B cell (primary cell): ENCODE measurements at regions of chr10 and their contacts with region 1.

Region 1: DNA sequence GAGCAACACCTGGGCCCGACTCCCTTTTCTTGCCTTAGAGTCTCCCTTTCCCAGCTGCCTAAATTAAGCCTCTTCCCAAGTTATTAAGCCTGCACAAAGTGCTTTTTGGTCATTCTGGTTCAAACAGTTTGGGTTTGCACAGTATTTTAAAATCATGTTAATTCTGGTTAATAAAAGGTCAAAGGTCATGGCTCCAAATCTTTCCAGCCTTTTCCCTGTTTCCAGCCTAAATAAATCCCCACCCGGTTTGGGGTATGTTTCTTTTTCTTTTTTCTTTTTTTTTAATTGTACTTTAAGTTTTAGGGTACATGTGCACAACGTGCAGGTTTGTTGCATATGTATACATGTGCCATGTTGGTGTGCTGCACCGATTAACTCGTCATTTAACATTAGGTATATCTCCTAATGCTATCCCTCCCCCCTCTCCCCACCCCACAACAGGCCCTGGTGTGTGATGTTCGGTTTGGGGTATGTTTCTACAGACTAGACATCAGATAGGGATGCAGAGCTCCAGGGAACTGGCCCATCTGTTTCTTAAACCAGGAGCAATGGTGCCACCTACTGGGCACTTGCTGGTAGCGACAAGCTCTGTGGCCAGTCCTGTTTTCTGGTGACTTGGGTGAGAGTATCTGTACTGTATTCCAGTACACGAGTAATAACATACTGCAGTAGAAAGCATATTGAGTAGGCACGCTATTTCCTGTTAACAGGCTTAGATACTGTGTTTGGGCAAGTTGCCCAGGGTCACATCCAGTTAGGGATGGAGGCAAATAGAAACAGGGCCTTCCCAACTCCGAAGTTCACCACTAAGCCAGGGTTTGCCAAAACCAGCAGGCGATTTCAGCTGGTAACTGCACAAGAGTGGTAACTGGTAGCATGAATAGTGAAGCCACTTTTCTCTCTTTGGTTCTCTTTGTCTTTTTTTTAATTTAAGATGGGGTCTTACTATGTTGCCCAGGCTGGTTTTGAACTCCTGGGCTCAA is 60.6 kb upstream of the TRIM8 start:
- DNase-seq: peak; percentile 85
- ATAC-seq: peak; percentile 96
- H3K4me3 ChIP-seq: no peak overlapping the region
- H3K4me3 Mint-ChIP-seq: no peak overlapping the region
- H3K27ac ChIP-seq: no peak overlapping the region
- H3K27ac Mint-ChIP-seq: no peak overlapping the region
- H3K4me1 ChIP-seq: no peaks in the 10 kb centered on the region
- H3K4me1 Mint-ChIP-seq: peaks cover 2% of the 10 kb centered on the region
- H3K27me3 ChIP-seq: no peaks in the 10 kb centered on the region
- H3K27me3 Mint-ChIP-seq: no peaks in the 10 kb centered on the region
- CTCF ChIP-seq: peak; percentile 90

Region 2: DNA sequence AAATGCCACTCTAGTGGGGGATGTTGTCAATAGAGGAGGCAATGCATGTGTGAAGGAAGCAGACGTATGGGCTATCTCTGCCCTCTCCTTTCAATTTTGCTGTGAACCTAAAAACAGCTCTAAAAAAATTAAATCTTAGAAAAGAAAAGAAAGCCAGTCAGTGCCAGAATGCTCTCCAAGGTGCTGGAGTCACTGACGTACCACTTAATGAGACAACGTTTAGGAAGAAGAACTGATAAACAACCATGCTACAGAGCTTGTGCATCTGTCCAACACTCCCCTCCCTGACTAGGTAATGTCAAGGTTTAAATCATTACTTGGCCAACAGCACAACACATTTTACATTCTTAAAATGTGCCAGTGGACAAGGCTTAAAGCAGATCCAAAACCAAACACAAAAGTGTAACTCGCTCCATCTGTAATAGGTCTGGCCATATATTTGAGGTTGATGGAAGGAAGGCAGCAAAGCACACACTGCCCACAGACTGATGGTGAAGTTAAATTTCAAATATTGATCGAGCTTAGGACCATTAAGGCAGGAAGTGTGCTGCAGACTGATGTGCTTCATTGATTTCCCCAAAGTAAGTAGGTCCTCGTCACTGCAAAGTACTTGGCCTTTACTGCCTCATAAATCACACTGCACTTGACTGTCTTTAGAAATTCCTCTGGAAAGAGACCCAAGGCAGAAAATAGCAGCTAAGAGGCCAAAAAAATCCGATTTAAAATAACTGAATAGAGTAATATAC is 543.2 kb before region 1 on chr10:
- CTCF ChIA-PET with region 1: no interaction called
- POLR2A ChIA-PET with region 1: no interaction called
- intact Hi-C with region 1: no loop called
- DNase-seq: no peak
- ATAC-seq: no peak
- H3K4me3 ChIP-seq: no peak overlapping the region
- H3K4me3 Mint-ChIP-seq: no peak overlapping the region
- H3K27ac ChIP-seq: no peak overlapping the region
- H3K27ac Mint-ChIP-seq: no peak overlapping the region
- H3K4me1 ChIP-seq: peaks cover 0 to 3% of the 10 kb centered on the region in 2 donors
- H3K4me1 Mint-ChIP-seq: peaks cover 21% of the 10 kb centered on the region
- H3K27me3 ChIP-seq: no peaks in the 10 kb centered on the region
- H3K27me3 Mint-ChIP-seq: no peaks in the 10 kb centered on the region
- CTCF ChIP-seq: no peak

Region 3: DNA sequence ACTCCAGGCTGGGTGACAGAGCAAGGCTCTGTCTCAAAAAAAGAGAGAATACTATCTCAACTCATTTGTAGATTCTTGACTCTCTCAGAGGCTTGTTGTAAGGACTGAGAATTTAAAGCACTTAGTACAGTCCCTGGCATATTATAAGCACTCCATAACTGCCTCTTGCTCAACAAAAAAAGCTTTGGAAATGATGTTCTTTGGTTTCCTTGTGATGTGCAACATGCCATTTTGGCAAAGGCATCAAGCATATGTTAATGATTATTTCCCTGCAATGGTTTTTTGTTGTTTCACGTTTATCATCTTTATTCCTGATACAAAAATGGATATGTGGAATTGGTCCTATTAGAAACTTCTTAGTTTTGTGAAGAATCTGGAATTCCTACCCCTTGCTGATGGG is 415.9 kb before region 1 on chr10:
- CTCF ChIA-PET with region 1: interaction called, 15 read pairs
- POLR2A ChIA-PET with region 1: no interaction called
- intact Hi-C with region 1: loop called (anchors 1 kb)
- DNase-seq: no peak
- ATAC-seq: no peak
- H3K4me3 ChIP-seq: no peak overlapping the region
- H3K4me3 Mint-ChIP-seq: no peak overlapping the region
- H3K27ac ChIP-seq: no peak overlapping the region
- H3K27ac Mint-ChIP-seq: no peak overlapping the region
- H3K4me1 ChIP-seq: peaks cover 7 to 8% of the 10 kb centered on the region in 2 donors
- H3K4me1 Mint-ChIP-seq: peaks cover 6% of the 10 kb centered on the region
- H3K27me3 ChIP-seq: no peaks in the 10 kb centered on the region
- H3K27me3 Mint-ChIP-seq: no peaks in the 10 kb centered on the region
- CTCF ChIP-seq: no peak

Region 4: GRCh38 chr10:102476466-102477141 is 107.1 kb before region 1 on chr10:
- CTCF ChIA-PET with region 1: interaction called, 28 read pairs
- POLR2A ChIA-PET with region 1: interaction called, 4 read pairs
- intact Hi-C with region 1: loop called (anchors 1 kb)
- DNase-seq: no peak
- ATAC-seq: no peak
- H3K4me3 ChIP-seq: no peak overlapping the region
- H3K4me3 Mint-ChIP-seq: no peak overlapping the region
- H3K27ac ChIP-seq: no peak overlapping the region
- H3K27ac Mint-ChIP-seq: no peak overlapping the region
- H3K4me1 ChIP-seq: peaks cover 0 to 7% of the 10 kb centered on the region in 2 donors
- H3K4me1 Mint-ChIP-seq: peaks cover 7% of the 10 kb centered on the region
- H3K27me3 ChIP-seq: no peaks in the 10 kb centered on the region
- H3K27me3 Mint-ChIP-seq: no peaks in the 10 kb centered on the region
- CTCF ChIP-seq: no peak

Region 5: DNA sequence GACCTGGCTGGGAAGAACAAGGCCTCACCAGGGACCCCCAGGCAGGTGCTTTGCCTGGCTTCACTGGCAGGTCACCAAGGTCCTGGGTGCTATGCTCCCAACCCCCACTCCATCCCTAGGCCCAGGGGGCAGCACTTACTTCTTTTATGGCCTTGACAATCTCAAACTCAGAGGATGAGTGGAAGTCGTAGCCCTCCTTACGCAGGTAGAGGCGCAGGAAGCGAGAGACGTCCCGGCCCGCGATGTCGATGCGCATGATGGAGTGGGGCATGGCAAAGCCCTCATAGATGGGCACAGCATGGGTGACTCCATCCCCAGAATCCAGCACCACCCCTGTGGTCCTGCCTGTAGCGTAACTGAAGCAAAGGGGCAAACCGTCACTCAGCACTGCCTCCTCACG is 99.7 kb before region 1 on chr10:
- CTCF ChIA-PET with region 1: interaction called, 28 read pairs
- POLR2A ChIA-PET with region 1: no interaction called
- intact Hi-C with region 1: loop called (anchors 1 kb)
- DNase-seq: no peak
- ATAC-seq: no peak
- H3K4me3 ChIP-seq: no peak overlapping the region
- H3K4me3 Mint-ChIP-seq: no peak overlapping the region
- H3K27ac ChIP-seq: no peak overlapping the region
- H3K27ac Mint-ChIP-seq: no peak overlapping the region
- H3K4me1 ChIP-seq: peaks cover 0 to 3% of the 10 kb centered on the region in 2 donors
- H3K4me1 Mint-ChIP-seq: peaks cover 3% of the 10 kb centered on the region
- H3K27me3 ChIP-seq: no peaks in the 10 kb centered on the region
- H3K27me3 Mint-ChIP-seq: no peaks in the 10 kb centered on the region
- CTCF ChIP-seq: no peak

Region 6: GRCh38 chr10:102511583-102512274 is 72.0 kb before region 1 on chr10:
- CTCF ChIA-PET with region 1: interaction called, 110 read pairs
- POLR2A ChIA-PET with region 1: no interaction called
- intact Hi-C with region 1: no loop called
- DNase-seq: peak; percentile 70
- ATAC-seq: peak; percentile 96
- H3K4me3 ChIP-seq: peak overlapping the region in 1 of 5 experiments; percentile 21
- H3K4me3 Mint-ChIP-seq: peak overlapping the region; percentile 38
- H3K27ac ChIP-seq: peak overlapping the region; percentile 45 to 75
- H3K27ac Mint-ChIP-seq: peak overlapping the region; percentile 78
- H3K4me1 ChIP-seq: peaks cover 13 to 14% of the 10 kb centered on the region in 2 donors
- H3K4me1 Mint-ChIP-seq: peaks cover 18% of the 10 kb centered on the region
- H3K27me3 ChIP-seq: no peaks in the 10 kb centered on the region
- H3K27me3 Mint-ChIP-seq: no peaks in the 10 kb centered on the region
- CTCF ChIP-seq: no peak

Region 7: DNA sequence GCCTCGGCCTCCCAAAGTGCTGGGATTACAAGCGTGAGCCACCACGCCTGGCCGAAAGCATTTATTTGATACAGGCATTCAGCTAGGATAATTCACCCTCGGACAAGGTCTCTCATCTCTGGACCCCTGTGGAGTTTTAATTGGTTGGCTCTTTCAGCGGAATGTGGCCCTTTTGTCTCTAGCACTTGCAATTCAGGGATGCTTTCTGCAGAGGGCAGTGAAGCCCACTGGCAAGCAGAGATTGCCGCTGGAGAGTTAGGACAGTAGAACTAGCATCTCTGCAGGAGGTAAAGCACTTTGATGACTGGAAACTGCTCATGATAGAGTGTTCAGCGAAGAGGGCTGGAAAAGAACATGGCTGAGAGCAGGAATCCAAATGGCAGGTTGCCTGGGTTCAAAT is 17.9 kb before region 1 on chr10:
- CTCF ChIA-PET with region 1: interaction called, 11 read pairs
- POLR2A ChIA-PET with region 1: no interaction called
- intact Hi-C with region 1: no loop called
- DNase-seq: no peak
- ATAC-seq: no peak
- H3K4me3 ChIP-seq: no peak overlapping the region
- H3K4me3 Mint-ChIP-seq: no peak overlapping the region
- H3K27ac ChIP-seq: no peak overlapping the region
- H3K27ac Mint-ChIP-seq: no peak overlapping the region
- H3K4me1 ChIP-seq: no peaks in the 10 kb centered on the region
- H3K4me1 Mint-ChIP-seq: peaks cover 2% of the 10 kb centered on the region
- H3K27me3 ChIP-seq: no peaks in the 10 kb centered on the region
- H3K27me3 Mint-ChIP-seq: no peaks in the 10 kb centered on the region
- CTCF ChIP-seq: no peak

Region 8: DNA sequence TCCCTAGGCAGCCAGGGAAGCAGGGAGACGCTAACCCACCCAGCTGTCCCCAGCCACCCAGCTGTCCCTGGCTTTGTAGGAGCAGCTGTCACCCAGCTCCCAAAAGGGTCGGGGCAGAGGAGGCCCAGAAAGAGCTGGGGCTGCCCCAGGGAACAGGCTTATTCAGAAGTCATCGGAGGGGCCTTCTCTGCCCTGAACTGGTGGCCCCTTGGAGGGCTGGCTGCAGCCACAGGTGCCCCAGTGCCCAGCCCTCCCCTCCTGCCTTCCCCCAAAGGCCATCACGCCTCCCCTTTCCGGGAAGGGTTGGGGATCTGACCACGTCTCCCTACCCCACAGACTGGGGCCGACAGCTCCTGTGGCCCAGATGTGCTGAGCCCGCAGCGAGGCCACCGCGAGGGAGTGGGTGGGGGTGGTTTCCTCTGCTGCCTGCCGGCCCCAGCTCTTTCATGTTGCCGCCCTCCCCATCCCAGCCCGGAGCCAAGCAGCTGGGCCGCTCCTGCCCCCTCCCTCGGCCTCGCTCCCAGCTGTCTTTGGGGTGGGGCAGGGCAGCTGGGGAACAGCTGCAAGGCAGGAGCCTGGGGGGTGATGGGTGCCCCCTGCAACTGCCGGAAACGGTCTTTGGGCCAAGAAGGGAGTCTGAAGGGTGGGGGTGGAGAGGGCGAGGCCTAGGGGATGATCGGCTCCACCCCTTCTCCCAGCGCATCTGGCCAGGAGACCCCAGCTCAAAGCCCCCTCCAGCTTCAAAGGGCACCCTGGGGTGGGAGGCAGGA is 77.3 kb after region 1 on chr10:
- CTCF ChIA-PET with region 1: no interaction called
- POLR2A ChIA-PET with region 1: no interaction called
- intact Hi-C with region 1: no loop called
- DNase-seq: peak; percentile 43
- ATAC-seq: peak; percentile 66
- H3K4me3 ChIP-seq: peak overlapping the region in 2 of 5 experiments; percentile 8 to 12
- H3K4me3 Mint-ChIP-seq: peak overlapping the region; percentile 49
- H3K27ac ChIP-seq: peak overlapping the region in 1 of 2 donors; percentile 23
- H3K27ac Mint-ChIP-seq: peak overlapping the region; percentile 56
- H3K4me1 ChIP-seq: peaks cover 12 to 15% of the 10 kb centered on the region in 2 donors
- H3K4me1 Mint-ChIP-seq: peaks cover 16% of the 10 kb centered on the region
- H3K27me3 ChIP-seq: no peaks in the 10 kb centered on the region
- H3K27me3 Mint-ChIP-seq: no peaks in the 10 kb centered on the region
- CTCF ChIP-seq: no peak